Esophagus squamous epithelium (tissue), 5 donors: ENCODE measurements at regions of chr1 and their contacts with region 1.

Region 1: DNA sequence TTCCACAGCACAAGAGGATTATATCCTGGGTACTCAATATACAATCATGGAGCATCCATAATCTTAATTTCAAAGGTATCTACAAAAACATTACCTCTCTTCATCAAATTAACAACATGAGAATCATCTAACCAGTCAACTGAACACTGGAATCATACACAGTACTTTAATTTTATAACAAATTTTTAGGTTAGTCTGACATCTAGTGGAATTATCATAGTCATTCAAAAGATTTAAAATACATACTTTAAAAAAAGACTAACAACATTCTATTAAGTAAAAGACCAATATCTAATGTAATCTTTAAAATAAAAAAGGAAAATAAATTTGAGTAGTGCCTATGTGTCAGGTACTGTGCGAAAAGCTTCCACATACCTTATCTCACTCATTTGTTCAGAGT is 16.8 kb upstream of the SH3GLB1 start:
- DNase-seq: no peak
- H3K4me3 ChIP-seq: no peak overlapping the region
- H3K27ac ChIP-seq: no peak overlapping the region
- H3K4me1 ChIP-seq: no peaks in the 10 kb centered on the region
- H3K27me3 ChIP-seq: no peaks in the 10 kb centered on the region
- CTCF ChIP-seq: peak in 4 of 6 experiments; percentile 9 to 56 (median 18)
- POLR2A ChIP-seq: no peak

Region 2: DNA sequence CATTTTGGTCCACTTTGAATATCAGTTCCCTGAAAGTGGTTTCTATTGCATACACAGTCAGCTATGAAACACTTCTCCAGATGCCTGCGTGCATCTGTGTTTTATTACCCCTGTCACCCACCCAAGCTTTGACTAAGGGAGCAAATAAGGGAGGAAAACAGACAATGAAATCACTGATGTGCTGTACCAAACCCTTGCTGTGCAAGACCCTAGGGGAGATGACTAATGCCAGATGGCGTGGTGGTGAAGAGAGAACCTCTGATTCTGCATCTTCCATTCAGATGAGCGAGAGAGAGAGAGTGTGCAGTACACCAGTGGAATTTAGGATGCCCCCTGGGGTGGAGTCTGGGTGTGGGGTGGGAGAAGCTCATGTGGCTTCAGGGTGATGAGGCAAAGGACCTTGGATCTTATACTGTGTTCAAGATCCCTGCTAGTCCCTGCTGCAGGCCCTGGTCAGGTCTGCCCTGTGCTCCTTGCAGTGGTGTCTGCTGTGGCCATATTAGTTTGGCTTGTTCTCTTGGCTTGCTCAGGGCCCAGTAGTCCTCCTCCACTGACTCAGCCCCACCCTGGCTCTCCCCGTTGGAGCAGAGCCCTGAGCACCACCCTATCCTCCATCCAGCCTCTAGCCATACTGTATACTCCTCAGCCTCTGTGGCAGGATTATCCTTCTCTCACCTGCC is 200.3 kb before region 1 on chr1:
- intact Hi-C with region 1: loop called (anchors 5 kb)
- DNase-seq: no peak
- H3K4me3 ChIP-seq: no peak overlapping the region
- H3K27ac ChIP-seq: peak overlapping the region in 2 of 4 donors; percentile 22 to 51
- H3K4me1 ChIP-seq: no peaks in the 10 kb centered on the region
- H3K27me3 ChIP-seq: no peaks in the 10 kb centered on the region
- CTCF ChIP-seq: no peak
- POLR2A ChIP-seq: no peak

Region 3: DNA sequence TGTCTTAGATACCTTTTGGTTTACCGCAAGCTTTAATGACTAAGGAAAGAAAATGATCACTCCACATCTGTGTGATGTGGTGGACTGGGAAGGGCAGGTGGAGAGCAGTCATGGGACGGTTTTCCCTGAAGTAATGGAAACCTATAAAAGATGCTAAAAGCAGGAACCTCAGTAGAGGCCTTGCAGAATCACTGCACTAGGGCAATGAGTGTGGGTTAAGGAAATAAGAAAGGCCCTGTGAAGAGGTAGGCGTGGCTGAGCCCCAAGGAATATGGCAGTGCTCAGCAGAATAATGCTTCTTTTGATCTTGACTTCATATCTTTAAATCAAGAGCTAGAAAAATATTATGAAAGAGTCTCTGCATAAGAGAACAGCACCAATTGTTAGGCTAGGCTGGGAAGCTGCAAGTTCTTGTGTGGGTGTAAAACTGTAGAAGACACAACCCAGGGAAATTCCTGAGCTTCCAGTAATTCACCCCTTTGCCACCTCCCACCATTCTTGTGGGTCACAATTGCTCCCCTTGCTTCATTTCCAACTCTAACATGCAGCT is 90.8 kb before region 1 on chr1:
- intact Hi-C with region 1: no loop called
- DNase-seq: no peak
- H3K4me3 ChIP-seq: no peak overlapping the region
- H3K27ac ChIP-seq: no peak overlapping the region
- H3K4me1 ChIP-seq: peaks cover 0 to 15% (median 0%) of the 10 kb centered on the region in 3 donors
- H3K27me3 ChIP-seq: no peaks in the 10 kb centered on the region
- CTCF ChIP-seq: no peak
- POLR2A ChIP-seq: no peak

Region 4: GRCh38 chr1:86798608-86799291 is 111.2 kb after region 1 on chr1:
- intact Hi-C with region 1: no loop called
- DNase-seq: no peak
- H3K4me3 ChIP-seq: no peak overlapping the region
- H3K27ac ChIP-seq: no peak overlapping the region
- H3K4me1 ChIP-seq: peaks cover 0 to under 1% (median 0%) of the 10 kb centered on the region in 3 donors
- H3K27me3 ChIP-seq: no peaks in the 10 kb centered on the region
- CTCF ChIP-seq: no peak
- POLR2A ChIP-seq: no peak